Activated T-helper 2 cell treated with anti-CD3 and anti-CD28 coated beads, Interferon-gamma antibody, Interleukin-2, Interleukin-4, amounts not matched to agents 10 μg/mL and 5 μg/mL and 100 μg/mL, durations not matched to agents 14 hours and 24 hours and 36 hours (primary cell): ENCODE measurements at regions of chr6 and their contacts with region 1.

Region 1: DNA sequence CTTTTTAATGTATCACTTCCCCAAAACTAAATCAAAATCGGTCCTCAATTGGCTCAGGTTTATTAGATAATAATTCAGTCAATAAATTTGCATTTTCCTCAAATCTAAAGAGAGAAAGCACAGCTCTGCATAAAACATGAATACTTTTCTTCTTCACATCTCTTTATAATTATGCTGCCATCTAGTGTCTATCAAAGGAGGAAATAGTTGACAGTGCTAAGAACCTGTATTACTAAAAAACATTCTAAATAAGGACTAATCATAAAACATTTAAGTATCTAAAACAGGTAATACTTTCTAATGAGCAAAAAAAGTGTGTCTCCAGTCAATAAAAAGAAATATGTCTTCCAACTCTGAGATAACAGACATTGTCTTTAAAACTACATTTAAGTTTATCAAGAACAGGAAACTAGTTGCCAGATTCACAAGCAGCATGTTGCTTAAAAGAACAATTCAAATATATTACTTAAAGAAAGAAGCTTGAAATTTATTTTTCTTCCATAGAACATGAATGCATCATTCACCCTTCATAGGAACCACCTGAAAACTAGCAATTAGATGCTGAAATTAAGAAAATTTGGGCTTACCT is 56.5 kb upstream of the DST start:
- DNase-seq: no peak
- H3K4me3 Mint-ChIP-seq: no peak overlapping the region
- H3K27ac Mint-ChIP-seq: no peak overlapping the region
- H3K4me1 Mint-ChIP-seq: no peaks in the 10 kb centered on the region
- H3K27me3 Mint-ChIP-seq: peaks cover 2% of the 10 kb centered on the region

Region 2: DNA sequence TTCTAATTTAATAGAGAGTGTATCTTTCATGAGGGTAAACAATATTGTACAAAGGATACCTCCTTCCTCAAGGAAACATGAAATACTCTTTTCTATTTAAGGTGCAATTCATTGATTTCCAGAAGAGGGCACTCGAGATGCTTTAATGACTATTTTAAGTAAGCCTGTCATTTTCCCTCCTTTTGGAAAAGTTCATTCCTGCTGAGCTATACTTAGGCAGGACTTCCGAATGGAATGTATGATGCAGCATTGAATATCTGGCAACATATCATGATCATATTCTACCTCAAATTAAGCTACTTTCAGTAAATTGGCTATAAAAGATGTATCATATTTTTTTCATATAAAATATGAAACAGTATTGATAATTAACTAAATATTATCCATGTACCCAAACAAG is 61.5 kb before region 1 on chr6:
- intact Hi-C with region 1: loop called (anchors 5 kb)
- DNase-seq: no peak
- H3K4me3 Mint-ChIP-seq: no peak overlapping the region
- H3K27ac Mint-ChIP-seq: no peak overlapping the region
- H3K4me1 Mint-ChIP-seq: no peaks in the 10 kb centered on the region
- H3K27me3 Mint-ChIP-seq: no peaks in the 10 kb centered on the region

Region 3: DNA sequence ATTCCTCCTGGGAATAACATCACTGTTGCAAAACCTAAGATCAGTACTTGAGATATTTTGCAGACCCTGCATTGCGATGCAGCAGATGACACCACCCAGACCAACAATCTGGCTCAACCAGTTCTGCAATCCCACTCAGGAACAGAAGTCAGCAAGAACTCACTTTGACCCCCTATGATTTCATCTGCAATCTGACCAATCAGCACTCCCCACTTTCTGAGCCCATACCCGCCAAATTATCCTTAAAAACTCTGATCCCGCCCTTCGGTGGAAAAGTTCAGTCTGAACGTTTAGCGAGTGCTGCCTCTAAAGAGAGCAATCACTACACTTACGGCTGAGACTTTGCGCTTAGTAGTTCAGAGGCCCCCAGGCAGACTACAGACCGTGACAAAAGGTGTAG is 330.0 kb after region 1 on chr6:
- intact Hi-C with region 1: no loop called
- DNase-seq: no peak
- H3K4me3 Mint-ChIP-seq: no peak overlapping the region
- H3K27ac Mint-ChIP-seq: no peak overlapping the region
- H3K4me1 Mint-ChIP-seq: no peaks in the 10 kb centered on the region
- H3K27me3 Mint-ChIP-seq: peaks cover 37% of the 10 kb centered on the region